Psoas muscle (tissue), 8 donors: ENCODE measurements at regions of chr22 and their contacts with region 1.

Region 1: DNA sequence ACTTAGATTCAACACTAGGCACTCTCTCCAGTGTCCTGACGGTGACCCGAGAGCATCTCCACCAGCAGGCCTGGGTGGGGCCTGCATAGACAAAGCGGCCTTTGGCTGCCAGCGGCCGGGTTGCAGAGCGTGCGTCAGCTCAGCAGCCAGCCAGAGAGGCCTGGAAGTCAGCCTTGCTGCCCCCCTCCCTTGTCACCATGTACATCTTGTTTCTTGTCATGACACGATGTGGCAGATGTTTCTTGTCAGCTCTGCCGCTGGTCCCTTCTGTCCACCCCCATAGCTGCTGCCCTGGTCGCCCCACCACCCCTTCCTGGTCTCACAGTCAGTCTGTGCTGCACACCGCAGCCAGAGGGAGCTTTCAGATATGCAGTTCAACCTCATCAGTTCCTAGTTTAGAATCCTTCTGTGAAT is 33.1 kb upstream of the CBX7 start:
- DNase-seq: peak; percentile 71 to 83
- ATAC-seq: peak; percentile 56 to 77 (median 62)
- H3K4me3 ChIP-seq: no peak overlapping the region
- H3K27ac ChIP-seq: peak overlapping the region; percentile 67
- H3K4me1 ChIP-seq: peaks cover 9% of the 10 kb centered on the region
- H3K27me3 ChIP-seq: no peaks in the 10 kb centered on the region
- CTCF ChIP-seq: peak; percentile 17

Region 2: GRCh38 chr22:39224581-39225365 is 39.2 kb after region 1 on chr22:
- intact Hi-C with region 1: loop called in 1 of 2 experiments (anchors 5 kb)
- DNase-seq: peak in 1 of 2 donors; percentile 17
- ATAC-seq: no peak
- H3K4me3 ChIP-seq: no peak overlapping the region
- H3K27ac ChIP-seq: no peak overlapping the region
- H3K4me1 ChIP-seq: peaks cover 11% of the 10 kb centered on the region
- H3K27me3 ChIP-seq: no peaks in the 10 kb centered on the region
- CTCF ChIP-seq: no peak

Region 3: GRCh38 chr22:39240828-39241793 is 55.5 kb after region 1 on chr22:
- intact Hi-C with region 1: no loop called
- DNase-seq: peak; percentile 70 to 82
- ATAC-seq: peak; percentile 20 to 53 (median 44)
- H3K4me3 ChIP-seq: peak overlapping the region; percentile 73
- H3K27ac ChIP-seq: peak overlapping the region; percentile 87
- H3K4me1 ChIP-seq: peaks cover 62% of the 10 kb centered on the region
- H3K27me3 ChIP-seq: no peaks in the 10 kb centered on the region
- CTCF ChIP-seq: no peak